AG04450 (cell line): ENCODE measurements at regions of chr1 and their contacts with region 1.

Region 1: DNA sequence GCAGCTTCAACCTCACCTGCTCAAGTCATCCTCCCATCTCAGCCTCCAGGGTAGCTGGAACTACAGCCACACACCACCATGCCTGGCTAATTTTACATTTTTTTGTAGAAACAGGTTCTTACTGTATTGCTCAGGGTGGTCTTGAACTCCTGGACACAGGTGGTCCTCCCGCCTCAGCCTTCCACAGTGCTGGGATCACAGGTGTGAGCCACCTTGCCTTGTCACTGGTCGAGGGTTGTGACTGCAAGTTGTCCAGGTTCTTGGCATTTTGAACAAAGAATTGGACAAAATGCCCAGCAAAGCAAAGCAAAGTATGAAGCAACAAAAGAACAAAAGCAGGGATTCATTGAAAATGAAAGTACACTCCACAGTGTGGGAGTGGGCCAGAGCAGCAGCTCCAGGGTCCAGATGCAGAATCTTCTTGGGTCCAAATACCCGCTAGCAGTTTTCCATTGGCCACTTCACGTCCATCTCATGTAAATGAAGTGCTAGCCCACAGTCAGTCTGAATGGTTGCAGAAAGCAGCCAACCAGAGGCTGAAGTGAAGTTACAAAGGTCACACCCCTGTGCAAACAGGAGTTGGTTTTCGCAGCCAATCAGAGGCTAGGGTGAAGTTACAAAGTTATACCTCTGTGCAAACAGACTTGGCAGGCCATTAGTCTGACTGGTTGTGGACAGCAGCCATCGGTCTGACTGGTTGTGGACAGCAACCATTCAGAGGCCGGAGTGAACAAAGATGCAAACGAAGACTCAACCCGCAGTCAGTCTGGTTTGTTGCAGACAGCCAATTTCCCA is 109.5 kb upstream of the KIF26B start:
- DNase-seq: no peak
- H3K4me3 ChIP-seq: no peak overlapping the region
- H3K27ac ChIP-seq: peak overlapping the region; percentile 2
- H3K27me3 ChIP-seq: no peaks in the 10 kb centered on the region
- CTCF ChIP-seq: no peak

Region 2: GRCh38 chr1:244496186-244496585 is 549.1 kb before region 1 on chr1:
- CTCF ChIA-PET with region 1: no interaction called
- POLR2A ChIA-PET with region 1: no interaction called
- DNase-seq: no peak
- H3K4me3 ChIP-seq: no peak overlapping the region
- H3K27ac ChIP-seq: no peak overlapping the region
- H3K27me3 ChIP-seq: no peaks in the 10 kb centered on the region
- CTCF ChIP-seq: no peak

Region 3: DNA sequence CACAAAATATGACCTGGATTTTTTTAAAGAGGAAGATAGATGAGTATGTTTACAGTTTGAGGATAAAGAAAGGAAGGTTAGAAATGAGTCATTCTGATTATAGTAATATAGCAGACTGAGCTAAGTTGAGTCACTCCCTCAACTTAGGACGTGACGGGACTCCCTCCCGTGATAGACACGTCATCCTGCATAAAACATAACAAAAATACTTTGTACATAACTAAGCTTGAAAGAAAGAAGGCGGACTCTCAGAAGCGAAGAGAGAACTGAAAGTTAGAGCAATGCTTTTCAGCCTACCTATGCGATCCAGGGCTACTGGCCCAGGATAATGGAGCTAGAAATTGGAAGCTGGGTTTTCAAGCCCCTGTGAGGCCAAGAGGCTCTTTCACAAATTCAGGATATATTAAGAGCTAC is 445.3 kb before region 1 on chr1:
- CTCF ChIA-PET with region 1: interaction called, 22 read pairs
- POLR2A ChIA-PET with region 1: no interaction called
- DNase-seq: peak; percentile 89
- H3K4me3 ChIP-seq: peak overlapping the region; percentile 55
- H3K27ac ChIP-seq: peak overlapping the region; percentile 94
- H3K27me3 ChIP-seq: no peaks in the 10 kb centered on the region
- CTCF ChIP-seq: no peak

Region 4: DNA sequence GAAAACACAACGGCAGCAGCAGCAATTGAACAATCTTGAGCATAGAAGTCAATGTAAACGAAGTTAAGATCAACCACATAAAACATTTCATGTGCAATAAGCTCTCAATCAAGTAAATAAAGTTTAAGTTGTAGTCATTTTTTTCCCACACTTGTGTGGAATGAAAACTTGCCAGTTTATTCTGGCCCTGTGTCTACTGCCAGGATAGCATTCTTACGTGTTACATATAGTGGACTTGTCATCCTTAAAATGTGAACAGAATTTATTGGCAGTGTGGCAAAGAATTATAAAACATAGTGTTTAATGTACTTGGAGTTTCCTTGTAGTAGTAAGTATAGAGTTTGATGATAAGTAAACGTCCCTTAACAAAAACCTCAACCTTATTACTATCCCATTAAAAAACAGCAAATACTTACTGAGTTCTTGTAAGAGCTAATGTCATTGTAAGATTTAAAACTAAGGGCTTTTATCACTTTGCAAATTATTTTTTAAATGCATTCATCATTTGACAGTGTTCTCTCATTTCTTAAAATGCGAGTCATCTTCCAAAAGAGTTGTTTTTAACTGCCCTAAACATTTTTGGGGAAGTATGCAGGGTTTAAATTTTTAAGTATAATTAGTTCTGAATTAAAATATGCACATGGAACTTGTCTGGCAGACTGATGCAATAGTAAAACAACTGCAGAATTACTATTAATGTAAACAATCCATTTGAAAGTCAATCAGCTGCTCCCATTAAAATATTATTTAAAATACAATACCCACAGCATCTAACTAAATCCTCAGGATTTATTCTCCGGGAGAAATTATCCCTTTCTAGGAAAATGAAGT is 201.9 kb before region 1 on chr1:
- CTCF ChIA-PET with region 1: interaction called, 12 read pairs
- POLR2A ChIA-PET with region 1: no interaction called
- DNase-seq: no peak
- H3K4me3 ChIP-seq: no peak overlapping the region
- H3K27ac ChIP-seq: no peak overlapping the region
- H3K27me3 ChIP-seq: no peaks in the 10 kb centered on the region
- CTCF ChIP-seq: no peak

Region 5: DNA sequence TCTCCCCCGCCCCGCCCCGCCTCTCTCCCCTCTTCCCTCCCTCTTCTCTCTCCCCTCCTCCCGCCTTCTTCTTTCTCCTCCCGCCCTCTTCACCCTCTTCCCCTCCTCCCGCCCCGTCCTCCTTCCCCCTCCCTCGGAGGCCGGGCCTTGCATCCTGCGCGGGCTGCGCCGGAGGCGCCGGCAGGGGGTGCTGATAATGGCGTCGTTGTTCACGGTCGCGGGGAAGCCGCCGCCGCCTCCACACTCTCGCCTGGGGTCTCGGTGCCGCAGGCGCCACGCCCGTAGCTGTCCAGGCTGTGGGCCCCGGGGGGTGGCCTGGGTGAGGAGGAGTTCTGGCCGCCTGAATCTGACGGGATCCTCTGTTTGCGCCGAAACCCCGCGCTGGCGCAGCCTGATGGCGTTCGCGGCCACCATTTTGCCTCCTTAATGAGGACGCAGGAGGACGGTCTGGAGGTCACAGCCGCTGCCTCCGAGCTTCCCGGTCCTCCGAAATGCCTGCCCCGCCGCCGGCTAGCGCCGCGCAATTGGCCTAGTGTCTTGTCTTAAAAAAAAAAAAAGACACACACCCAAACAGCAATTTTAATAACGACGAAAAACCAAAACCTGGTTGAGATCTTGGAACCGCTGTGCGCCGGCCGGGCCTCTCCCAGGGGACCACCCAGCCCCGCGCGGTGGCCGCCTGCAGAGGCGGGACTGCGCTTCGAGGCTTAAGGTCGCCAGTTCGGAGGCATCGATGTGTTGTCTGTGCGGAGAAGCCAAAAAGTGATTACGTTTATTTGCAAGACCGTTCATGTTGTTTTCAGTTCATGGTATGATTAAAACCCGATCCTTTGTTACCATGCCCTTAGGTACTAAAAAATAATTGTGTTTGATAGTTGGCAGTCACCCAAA is 74.4 kb before region 1 on chr1:
- CTCF ChIA-PET with region 1: interaction called, 20 read pairs
- POLR2A ChIA-PET with region 1: interaction called, 19 read pairs
- DNase-seq: peak; percentile 91
- H3K4me3 ChIP-seq: peak overlapping the region; percentile 73
- H3K27ac ChIP-seq: peak overlapping the region; percentile 99
- H3K27me3 ChIP-seq: no peaks in the 10 kb centered on the region
- CTCF ChIP-seq: peak; percentile 64

Region 6: GRCh38 chr1:245019910-245020486 is 25.3 kb before region 1 on chr1:
- CTCF ChIA-PET with region 1: interaction called, 34 read pairs
- POLR2A ChIA-PET with region 1: no interaction called
- DNase-seq: no peak
- H3K4me3 ChIP-seq: no peak overlapping the region
- H3K27ac ChIP-seq: no peak overlapping the region
- H3K27me3 ChIP-seq: no peaks in the 10 kb centered on the region
- CTCF ChIP-seq: no peak

Region 7: DNA sequence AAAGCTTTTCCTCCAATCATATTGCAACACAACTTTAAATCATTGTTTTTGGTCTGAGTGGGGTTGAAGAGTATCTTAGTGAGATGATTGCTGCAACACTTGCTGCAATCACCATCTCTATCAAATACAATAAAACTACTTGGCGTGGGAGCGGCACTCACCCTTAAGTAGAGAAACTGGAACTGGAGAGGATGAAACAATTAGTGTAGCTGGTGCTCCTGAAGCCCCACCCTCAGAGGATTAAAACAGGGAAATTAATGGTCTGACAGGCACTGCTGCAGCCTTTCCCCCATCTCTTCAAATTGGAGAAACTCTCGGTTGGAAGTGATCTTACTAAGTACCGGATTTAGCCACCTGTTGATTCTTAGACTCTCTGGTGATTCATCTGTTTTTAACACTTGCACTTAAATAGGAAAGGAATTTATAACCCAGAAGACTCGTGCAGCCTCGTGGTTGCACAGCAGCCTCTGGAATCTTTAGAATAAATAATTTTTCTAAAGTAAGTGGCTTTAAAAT is 29.0 kb after region 1 on chr1:
- CTCF ChIA-PET with region 1: interaction called, 15 read pairs
- POLR2A ChIA-PET with region 1: no interaction called
- DNase-seq: no peak
- H3K4me3 ChIP-seq: no peak overlapping the region
- H3K27ac ChIP-seq: no peak overlapping the region
- H3K27me3 ChIP-seq: no peaks in the 10 kb centered on the region
- CTCF ChIP-seq: no peak